ENCODE measurements at regions of chr1 and their contacts with region 1.

Region 1: DNA sequence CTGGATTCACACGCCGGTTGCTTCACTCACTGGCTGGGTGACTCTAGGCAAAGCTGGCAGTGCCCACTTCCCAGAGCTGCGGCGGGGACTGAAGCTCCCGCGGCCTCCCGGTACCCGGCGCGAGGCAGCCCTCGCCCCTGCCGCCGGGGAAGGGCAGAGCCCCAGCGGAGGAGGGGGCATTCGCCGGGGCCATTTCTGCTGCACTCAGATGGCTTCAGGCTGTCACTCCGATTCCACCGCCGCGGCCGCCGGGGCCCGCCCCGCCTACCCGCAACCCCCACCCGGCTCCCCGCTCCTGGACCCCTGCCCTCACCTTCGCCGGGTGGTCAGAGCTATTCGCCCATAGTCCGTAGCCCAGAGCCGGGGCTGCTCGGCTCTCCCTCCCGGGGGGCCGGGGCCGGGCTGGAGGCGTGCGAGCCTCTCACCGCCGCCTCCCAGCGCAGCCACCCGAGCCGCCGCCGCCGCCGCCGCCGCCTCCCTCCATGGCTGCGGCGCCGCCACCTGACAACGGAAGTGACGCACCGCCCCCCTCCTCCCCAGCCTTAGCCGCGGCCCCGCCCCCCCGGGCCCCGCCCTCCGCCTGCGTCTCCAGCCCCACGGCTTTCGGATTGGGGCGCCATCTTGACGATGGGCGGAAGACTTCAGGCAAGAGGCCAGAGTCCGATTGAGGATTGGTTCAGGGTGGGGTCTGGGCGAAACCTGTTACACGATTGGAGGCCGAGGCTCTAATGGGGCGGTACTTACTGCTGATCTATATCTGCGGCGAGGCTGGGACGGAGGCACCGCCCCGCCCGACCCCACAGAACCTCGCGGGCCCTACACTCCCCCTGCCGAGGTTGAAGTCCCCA is at the start of gene STK40:
- DNase-seq: peak; percentile 97 to 99 (median 98)
- ATAC-seq: peak; percentile 85
- H3K4me3 ChIP-seq: peak within 1 kb of the TSS; percentile 87 to 89
- H3K4me3 Mint-ChIP-seq: peak within 1 kb of the TSS; percentile 88
- H3K27ac ChIP-seq: peak within 1 kb of the TSS; percentile 78 to 92
- H3K27ac Mint-ChIP-seq: peak within 1 kb of the TSS; percentile 98
- H3K4me1 ChIP-seq: peaks cover 27% of the 10 kb centered on the region
- H3K4me1 Mint-ChIP-seq: peaks cover 46% of the 10 kb centered on the region
- H3K27me3 ChIP-seq: no peaks in the 10 kb centered on the region
- H3K27me3 Mint-ChIP-seq: no peaks in the 10 kb centered on the region
- CTCF ChIP-seq: no peak
- total RNA-seq, gene STK40: 13.4 to 16.9 TPM

Region 2: DNA sequence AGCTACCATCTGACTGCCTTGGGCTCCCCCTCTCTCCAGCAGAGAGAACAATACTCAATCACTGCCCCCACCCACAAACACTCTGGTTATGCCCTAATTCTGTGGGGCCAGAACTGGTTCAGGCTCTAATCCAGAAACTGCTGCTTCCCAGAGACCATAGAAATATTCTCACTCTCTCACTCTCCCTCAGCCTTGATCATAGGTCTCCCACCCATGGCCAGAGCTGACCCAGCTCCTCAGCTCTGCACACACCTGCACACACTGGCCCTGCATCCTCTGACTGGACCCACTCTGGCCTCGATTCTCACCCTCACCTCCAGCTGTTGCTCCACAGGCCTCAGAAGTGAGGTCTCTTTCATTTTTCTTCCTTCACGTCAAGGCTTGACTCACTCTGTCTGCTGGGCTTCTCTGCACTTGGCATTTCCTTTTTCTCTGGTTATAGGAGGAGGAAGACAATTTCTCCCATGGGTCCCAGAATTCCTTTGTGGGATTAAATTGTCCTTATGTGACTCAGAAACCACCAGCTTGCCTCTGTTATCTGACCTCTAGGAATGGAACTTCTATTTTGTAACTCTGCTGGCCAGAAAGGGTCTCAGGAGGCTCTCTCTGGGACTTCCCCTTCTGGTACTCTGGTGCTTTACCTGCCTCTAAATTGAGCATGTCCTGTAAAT is 1338.3 kb before region 1 on chr1:
- CTCF ChIA-PET with region 1: no interaction called
- POLR2A ChIA-PET with region 1: no interaction called
- intact Hi-C with region 1: no loop called
- DNase-seq: no peak
- ATAC-seq: no peak
- H3K4me3 ChIP-seq: no peak overlapping the region
- H3K4me3 Mint-ChIP-seq: no peak overlapping the region
- H3K27ac ChIP-seq: no peak overlapping the region
- H3K27ac Mint-ChIP-seq: no peak overlapping the region
- H3K4me1 ChIP-seq: no peaks in the 10 kb centered on the region
- H3K4me1 Mint-ChIP-seq: no peaks in the 10 kb centered on the region
- H3K27me3 ChIP-seq: no peaks in the 10 kb centered on the region
- H3K27me3 Mint-ChIP-seq: no peaks in the 10 kb centered on the region
- CTCF ChIP-seq: no peak

Region 3: DNA sequence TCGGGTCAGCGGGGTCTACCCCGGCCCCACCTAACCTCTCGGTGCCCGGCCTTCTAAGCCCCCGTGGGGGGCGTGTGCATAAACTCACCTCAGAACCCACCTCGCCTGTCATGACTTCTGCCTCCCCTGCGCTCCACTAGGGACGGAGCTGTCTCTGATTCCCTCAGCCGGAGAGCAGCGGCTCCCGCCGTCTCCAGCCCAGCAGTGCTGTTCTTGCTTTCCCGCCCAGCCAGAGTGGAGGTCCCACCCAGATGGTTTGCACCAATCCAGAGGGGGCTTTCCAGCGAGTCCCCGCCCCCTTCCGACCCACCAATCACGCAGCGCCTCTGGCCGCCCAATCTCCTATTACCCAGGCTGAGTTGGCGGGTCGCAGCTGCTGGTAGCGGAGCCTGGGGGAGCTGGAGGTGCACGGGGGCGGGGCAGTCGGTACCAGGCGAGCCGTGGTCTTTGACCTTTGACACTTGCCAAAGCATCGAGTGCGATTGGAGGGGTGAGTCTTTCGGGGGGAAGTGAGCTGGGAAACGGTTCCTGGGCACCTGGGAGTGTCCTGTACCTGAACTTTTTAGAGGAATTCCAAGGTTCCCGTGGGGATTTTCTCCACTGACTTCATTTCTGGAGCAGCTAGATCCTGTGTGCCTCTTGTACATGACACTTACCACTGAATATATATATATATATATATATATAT is 615.7 kb before region 1 on chr1 and contains the start of gene CLSPN:
- CTCF ChIA-PET with region 1: no interaction called
- POLR2A ChIA-PET with region 1: no interaction called
- intact Hi-C with region 1: no loop called
- DNase-seq: peak; percentile 86 to 96 (median 93)
- ATAC-seq: peak; percentile 94
- H3K4me3 ChIP-seq: peak within 1 kb of the TSS; percentile 90 to 97
- H3K4me3 Mint-ChIP-seq: peak within 1 kb of the TSS; percentile 99
- H3K27ac ChIP-seq: peak within 1 kb of the TSS; percentile 61 to 81
- H3K27ac Mint-ChIP-seq: peak within 1 kb of the TSS; percentile 92
- H3K4me1 ChIP-seq: peaks cover 5% of the 10 kb centered on the region
- H3K4me1 Mint-ChIP-seq: peaks cover 8% of the 10 kb centered on the region
- H3K27me3 ChIP-seq: no peaks in the 10 kb centered on the region
- H3K27me3 Mint-ChIP-seq: no peaks in the 10 kb centered on the region
- CTCF ChIP-seq: no peak
- total RNA-seq, gene CLSPN: 0.41 to 0.81 TPM

Region 4: DNA sequence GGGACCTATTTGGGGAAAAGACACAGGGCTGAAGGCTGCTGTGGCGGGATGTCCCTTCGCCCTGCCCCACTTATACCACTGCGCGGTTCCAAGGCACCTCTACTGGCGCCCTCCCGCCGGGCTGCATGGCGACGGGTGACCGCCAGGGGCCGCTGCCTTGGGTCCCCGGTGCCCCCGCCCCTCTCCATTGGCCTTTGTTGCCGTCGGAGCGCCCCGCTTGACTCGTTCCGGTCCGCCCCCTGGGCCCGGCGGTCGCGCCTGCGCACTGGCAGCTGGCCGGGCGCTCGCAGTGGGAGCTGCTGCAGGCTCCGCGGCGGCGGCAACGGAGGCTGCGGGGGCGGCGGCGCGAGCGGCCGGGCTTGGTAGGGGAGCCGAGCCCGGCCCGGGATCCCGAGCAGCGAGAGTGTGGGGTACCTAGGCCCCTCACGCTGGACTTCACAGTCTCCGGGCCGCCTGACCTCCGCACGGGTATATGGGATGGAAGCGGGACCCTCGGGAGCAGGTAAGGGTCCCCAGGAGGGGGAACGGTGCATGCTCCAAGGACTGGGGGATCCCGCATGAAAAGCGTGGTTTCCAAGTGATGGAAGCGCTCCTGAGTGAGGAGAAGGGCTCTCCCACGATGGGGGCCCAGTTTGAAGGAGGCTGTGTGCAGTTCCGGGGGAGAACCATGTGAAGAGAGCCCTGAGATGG is 502.5 kb before region 1 on chr1 and contains the start of gene AGO1:
- CTCF ChIA-PET with region 1: no interaction called
- POLR2A ChIA-PET with region 1: no interaction called
- intact Hi-C with region 1: loop called in 1 of 2 experiments (anchors 5 kb)
- DNase-seq: peak; percentile 94 to 99 (median 97)
- ATAC-seq: peak; percentile 99
- H3K4me3 ChIP-seq: peak within 1 kb of the TSS; percentile 99 to 100
- H3K4me3 Mint-ChIP-seq: peak within 1 kb of the TSS; percentile 92
- H3K27ac ChIP-seq: peak within 1 kb of the TSS; percentile 59 to 68
- H3K27ac Mint-ChIP-seq: peak within 1 kb of the TSS; percentile 69
- H3K4me1 ChIP-seq: peaks cover 23% of the 10 kb centered on the region
- H3K4me1 Mint-ChIP-seq: peaks cover 52% of the 10 kb centered on the region
- H3K27me3 ChIP-seq: peaks cover 0 to 3% of the 10 kb centered on the region in 2 experiments
- H3K27me3 Mint-ChIP-seq: peaks cover 3% of the 10 kb centered on the region
- CTCF ChIP-seq: peak; percentile 77
- total RNA-seq, gene AGO1: 15.8 TPM

Region 5: GRCh38 chr1:36306902-36307456 is 78.7 kb before region 1 on chr1:
- CTCF ChIA-PET with region 1: interaction called, 4 read pairs
- POLR2A ChIA-PET with region 1: interaction called, 4 read pairs
- intact Hi-C with region 1: loop called in 1 of 2 experiments (anchors 1 kb)
- DNase-seq: peak; percentile 84 to 96 (median 93)
- ATAC-seq: peak; percentile 98
- H3K4me3 ChIP-seq: peak overlapping the region; percentile 58 to 63
- H3K4me3 Mint-ChIP-seq: peak overlapping the region; percentile 96
- H3K27ac ChIP-seq: peak overlapping the region; percentile 63
- H3K27ac Mint-ChIP-seq: peak overlapping the region; percentile 94
- H3K4me1 ChIP-seq: peaks cover 13% of the 10 kb centered on the region
- H3K4me1 Mint-ChIP-seq: peaks cover 7% of the 10 kb centered on the region
- H3K27me3 ChIP-seq: no peaks in the 10 kb centered on the region
- H3K27me3 Mint-ChIP-seq: no peaks in the 10 kb centered on the region
- CTCF ChIP-seq: no peak

Region 6: DNA sequence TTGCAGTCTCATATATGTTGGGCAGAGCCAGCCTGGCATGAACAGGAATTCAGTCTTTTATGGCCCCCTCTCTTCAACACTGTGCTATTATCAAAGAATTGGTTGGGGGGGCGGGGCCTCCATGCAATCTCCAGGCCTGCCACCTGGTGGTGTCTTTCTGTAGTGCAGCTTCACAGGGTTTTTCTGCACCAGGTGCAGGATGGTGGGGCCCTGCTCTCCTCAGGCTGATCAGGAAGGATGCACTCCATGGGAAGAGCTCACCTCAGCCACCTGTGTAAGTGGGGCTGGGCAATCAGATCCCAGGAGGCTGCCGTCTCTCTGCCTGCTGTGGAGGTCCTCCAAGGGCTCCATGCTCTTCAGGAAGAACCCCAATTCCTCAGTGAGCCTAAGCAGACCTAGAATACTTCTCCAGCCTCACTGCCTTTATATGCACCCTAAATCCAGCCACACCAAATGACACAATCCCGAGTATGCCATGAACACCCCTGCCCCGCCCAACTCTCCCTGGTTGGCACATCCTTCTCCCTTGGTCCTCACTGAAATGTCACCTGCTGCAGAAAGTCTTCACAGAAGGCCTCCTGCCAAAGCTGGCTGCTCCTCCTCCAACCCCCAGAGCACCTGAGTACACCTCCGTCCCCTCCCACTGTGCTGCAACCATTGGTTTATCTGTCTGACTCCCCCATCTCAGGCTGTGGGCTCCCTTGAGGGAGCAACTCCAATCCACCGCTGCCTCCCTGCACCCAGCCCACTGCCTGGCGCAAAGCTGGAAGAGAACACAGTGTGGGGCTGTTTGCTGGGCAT is 16.4 kb before region 1 on chr1:
- CTCF ChIA-PET with region 1: interaction called, 40 read pairs
- POLR2A ChIA-PET with region 1: interaction called, 45 read pairs
- intact Hi-C with region 1: loop called (anchors 1 kb)
- DNase-seq: peak; percentile 75 to 91 (median 85)
- ATAC-seq: peak; percentile 62
- H3K4me3 ChIP-seq: no peak overlapping the region
- H3K4me3 Mint-ChIP-seq: no peak overlapping the region
- H3K27ac ChIP-seq: peak overlapping the region in 1 of 2 experiments; percentile 25
- H3K27ac Mint-ChIP-seq: peak overlapping the region; percentile 79
- H3K4me1 ChIP-seq: peaks cover 55% of the 10 kb centered on the region
- H3K4me1 Mint-ChIP-seq: peaks cover 68% of the 10 kb centered on the region
- H3K27me3 ChIP-seq: no peaks in the 10 kb centered on the region
- H3K27me3 Mint-ChIP-seq: no peaks in the 10 kb centered on the region
- CTCF ChIP-seq: peak; percentile 88

Region 7: DNA sequence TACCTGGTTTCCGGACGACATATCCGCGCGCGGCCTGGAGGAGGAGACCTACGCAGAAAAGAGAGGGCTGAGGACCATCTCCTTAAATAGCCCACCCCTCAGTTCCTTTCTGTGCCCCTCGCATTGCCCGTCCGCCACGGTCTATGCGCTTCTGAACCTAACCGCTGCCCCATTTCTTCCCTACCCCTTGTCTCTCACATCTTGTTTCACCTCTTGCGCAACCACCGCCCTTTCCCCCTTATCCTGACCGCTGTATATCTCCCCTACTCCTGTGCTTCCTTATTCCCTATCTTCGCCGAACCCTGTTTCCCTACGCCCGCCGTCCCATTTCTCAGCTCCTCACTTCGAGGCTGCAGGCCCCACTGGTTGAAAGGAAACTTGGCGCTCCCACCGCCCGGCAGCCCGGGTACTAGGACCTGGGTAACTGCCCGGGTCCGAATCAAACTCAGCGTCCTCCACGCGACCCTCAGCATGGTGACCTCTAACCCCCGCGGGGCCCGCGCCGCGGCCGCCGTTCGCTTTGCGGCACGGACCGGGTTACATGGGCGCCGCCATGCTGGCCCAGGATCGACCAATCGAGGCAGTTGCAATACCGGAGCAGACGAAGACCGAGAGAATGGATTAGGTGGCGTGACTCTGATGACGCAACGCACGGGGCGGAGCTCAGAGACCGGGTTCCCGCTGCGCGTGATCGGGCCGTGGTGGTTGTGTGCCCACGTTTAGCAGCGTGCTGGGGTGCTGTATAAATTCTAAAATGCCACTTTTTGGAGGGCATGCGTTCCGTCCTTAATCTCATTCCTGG is 78.4 kb after region 1 on chr1 and contains the start of gene MRPS15:
- CTCF ChIA-PET with region 1: no interaction called
- POLR2A ChIA-PET with region 1: interaction called, 3 read pairs
- intact Hi-C with region 1: loop called in 1 of 2 experiments (anchors 1 kb)
- DNase-seq: peak; percentile 88 to 97 (median 94)
- ATAC-seq: peak; percentile 98
- H3K4me3 ChIP-seq: peak within 1 kb of the TSS; percentile 90 to 92
- H3K4me3 Mint-ChIP-seq: peak within 1 kb of the TSS; percentile 91
- H3K27ac ChIP-seq: peak within 1 kb of the TSS; percentile 82 to 90
- H3K27ac Mint-ChIP-seq: peak within 1 kb of the TSS; percentile 96
- H3K4me1 ChIP-seq: peaks cover 12% of the 10 kb centered on the region
- H3K4me1 Mint-ChIP-seq: peaks cover 29% of the 10 kb centered on the region
- H3K27me3 ChIP-seq: no peaks in the 10 kb centered on the region
- H3K27me3 Mint-ChIP-seq: no peaks in the 10 kb centered on the region
- CTCF ChIP-seq: no peak
- total RNA-seq, gene MRPS15: 37.9 to 45.4 TPM